ENCODE measurements at regions of chr6 and their contacts with region 1.

Region 1: DNA sequence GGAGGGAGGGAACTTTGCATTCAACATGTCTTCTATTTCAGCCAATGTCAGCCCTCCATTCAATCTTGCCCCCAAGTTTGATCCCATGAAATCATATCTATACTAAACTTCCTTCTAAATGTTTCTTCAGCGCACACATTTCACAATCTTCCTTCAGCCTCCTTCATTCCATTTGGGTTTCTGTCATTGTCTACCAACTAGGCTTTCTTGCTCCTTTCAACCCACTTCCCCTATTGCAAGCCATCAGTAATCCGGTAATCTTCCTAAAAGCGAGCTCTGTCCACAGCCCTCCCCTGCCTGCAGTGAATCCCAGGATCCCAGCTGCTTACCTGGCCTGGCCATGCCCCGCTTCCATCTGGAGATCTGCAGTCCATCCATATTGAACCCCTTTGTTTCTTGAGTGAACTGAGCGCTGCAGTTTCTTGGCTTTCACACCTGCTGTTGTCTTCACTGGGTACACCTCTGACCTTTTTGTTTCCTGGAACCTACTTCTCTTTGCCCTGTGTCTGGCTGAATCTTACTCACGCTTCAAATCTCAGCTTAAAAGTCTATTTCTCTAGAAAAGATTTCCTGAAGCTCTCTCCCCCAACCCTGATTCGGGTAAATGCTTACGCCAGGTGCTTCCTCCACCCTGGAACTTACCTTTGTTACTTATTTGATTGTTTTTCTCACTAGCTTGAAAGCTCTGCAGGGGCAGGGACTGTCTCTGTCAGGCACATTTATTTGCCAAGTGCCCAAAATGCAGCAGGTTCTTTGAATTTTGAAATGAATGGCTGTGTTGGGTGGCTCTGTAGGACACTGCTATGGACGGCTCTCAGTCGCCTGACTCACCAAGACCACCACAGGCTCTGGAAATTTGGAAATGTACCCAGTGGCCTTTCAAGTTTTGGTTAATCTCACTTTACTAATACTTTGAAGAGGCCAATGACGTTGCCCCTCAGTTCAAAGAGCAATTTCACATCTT is 50.3 kb downstream of the ADTRP start:
- DNase-seq: no peak
- H3K4me3 Mint-ChIP-seq: peak overlapping the region; percentile 53
- H3K27ac Mint-ChIP-seq: peak overlapping the region; percentile 72
- H3K4me1 Mint-ChIP-seq: peaks cover 69% of the 10 kb centered on the region
- H3K27me3 Mint-ChIP-seq: peaks cover 4% of the 10 kb centered on the region

Region 2: DNA sequence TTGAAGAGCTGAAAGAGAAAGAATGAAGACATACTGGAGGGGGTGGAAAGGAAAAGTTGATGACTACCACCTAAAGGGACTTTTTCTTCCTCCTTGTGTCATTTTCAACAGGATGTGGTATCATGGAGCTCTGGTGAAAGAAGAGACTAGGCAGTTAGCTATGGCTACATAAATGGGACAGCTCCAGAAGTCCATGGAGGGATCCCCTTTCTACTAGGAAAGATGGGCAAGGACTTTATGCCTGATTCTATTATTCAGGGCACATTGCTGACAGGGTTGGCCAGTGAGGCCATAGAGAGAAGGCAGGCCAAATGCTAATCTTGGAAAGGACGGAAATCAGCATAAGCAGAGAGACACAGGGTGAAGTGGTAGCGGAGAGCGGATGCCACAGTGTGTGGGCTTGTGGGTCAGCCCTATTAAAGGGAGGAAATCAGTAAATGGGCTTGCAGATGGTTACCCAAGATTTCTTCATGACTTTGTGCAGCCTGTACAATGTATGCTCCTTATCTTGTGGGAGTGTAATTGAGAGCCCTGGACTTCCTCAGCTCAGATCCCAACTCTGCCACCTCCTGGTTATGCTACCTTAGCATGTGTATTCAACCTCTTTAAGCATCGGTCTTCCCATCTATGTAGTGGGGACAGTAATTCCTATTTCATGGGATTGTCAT is 268.1 kb before region 1 on chr6:
- intact Hi-C with region 1: no loop called
- DNase-seq: no peak
- H3K4me3 Mint-ChIP-seq: peak overlapping the region; percentile 67
- H3K27ac Mint-ChIP-seq: peak overlapping the region; percentile 91
- H3K4me1 Mint-ChIP-seq: peaks cover 29% of the 10 kb centered on the region
- H3K27me3 Mint-ChIP-seq: peaks cover 2% of the 10 kb centered on the region

Region 3: GRCh38 chr6:11675601-11676000 is 52.7 kb before region 1 on chr6:
- intact Hi-C with region 1: no loop called
- DNase-seq: no peak
- H3K4me3 Mint-ChIP-seq: no peak overlapping the region
- H3K27ac Mint-ChIP-seq: no peak overlapping the region
- H3K4me1 Mint-ChIP-seq: no peaks in the 10 kb centered on the region
- H3K27me3 Mint-ChIP-seq: peaks cover 10% of the 10 kb centered on the region

Region 4: DNA sequence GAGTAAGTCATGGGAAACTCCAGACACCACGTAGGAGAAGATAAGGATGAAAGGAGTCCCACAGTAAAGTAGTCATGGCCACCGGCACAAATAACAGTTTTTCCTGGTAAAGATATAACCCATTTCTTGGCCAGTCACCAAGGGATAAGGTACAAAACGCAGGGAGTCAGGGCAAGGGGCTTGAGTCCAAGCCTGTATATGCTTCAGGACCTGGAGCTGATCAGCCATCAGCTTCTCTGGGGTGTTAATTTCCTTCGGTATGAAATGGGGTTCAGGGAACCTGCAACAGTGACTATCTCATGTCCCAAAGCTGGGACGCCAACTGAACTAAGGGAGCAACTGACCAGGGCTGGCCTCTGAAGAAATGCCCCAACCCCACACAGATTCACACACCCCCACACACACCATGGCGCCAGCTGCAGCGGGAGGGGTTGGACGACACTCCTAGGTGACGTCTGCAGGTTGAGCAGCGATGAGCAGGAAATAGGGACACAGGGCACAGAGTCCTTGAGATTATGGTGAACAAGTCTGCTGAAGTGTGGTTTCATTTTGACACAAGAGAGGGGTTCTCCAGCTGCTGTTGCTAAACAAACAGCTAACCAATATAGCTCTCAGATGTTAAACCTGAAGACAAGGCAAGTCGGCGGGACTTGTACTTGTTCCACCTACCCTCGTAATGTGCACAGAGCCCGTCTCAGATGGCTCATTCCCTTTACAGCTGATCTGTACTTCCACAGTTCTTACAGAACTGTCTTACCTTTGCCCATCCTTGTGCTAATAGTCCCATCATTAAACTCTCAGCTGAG is 57.7 kb after region 1 on chr6:
- intact Hi-C with region 1: loop called (anchors 1 kb)
- DNase-seq: peak; percentile 20
- H3K4me3 Mint-ChIP-seq: peak overlapping the region; percentile 40
- H3K27ac Mint-ChIP-seq: no peak overlapping the region
- H3K4me1 Mint-ChIP-seq: peaks cover 6% of the 10 kb centered on the region
- H3K27me3 Mint-ChIP-seq: no peaks in the 10 kb centered on the region

Region 5: GRCh38 chr6:11805261-11806053 is 77.2 kb after region 1 on chr6:
- intact Hi-C with region 1: no loop called
- DNase-seq: no peak
- H3K4me3 Mint-ChIP-seq: no peak overlapping the region
- H3K27ac Mint-ChIP-seq: no peak overlapping the region
- H3K4me1 Mint-ChIP-seq: peaks cover 7% of the 10 kb centered on the region
- H3K27me3 Mint-ChIP-seq: no peaks in the 10 kb centered on the region

Region 6: DNA sequence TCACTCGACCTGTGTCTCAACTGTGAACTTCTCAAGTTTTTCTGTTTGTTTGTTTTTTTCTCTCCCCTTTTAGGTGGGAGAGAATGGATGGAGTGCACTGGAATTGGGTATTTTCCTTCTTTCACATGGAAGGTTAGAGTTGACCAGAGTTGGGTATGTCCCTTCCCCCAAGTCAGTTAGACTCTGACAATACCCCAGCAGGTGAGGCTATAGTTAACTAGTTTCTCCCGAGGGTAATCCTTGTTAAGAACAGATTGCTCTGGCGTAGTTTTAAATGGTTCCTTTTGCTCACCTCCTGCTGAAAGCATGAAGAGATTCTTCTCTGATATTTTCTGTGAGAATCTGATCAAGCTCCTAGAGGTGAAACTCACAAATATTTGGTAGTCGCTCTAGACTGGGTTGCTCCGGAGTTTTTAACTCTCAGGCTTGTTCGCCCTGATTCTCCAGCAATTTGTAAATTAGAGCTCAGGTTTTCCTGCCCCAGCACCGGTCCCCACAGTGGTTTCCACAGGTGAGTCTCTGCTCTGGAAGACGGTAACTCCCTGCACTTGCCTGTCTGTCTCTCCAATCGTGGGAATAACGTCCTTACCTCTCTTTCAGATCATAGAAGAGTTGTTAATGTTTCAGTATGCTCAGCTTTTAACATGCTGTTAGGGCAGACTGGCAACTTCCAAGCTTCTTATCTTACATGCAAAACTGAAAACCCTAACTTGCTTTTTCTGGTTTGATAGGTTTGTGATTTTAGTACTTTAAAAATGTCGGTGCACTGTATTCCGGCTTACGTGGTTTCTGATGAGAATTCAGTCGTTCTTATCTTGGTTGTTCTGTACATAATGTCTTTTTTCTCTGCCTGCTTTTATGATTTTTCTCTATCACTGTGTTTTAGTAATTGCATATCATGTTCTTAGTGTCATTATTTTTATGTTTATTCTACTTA is 172.7 kb after region 1 on chr6:
- intact Hi-C with region 1: loop called (anchors 2 kb)
- DNase-seq: no peak
- H3K4me3 Mint-ChIP-seq: peak overlapping the region; percentile 20
- H3K27ac Mint-ChIP-seq: peak overlapping the region; percentile 3
- H3K4me1 Mint-ChIP-seq: peaks cover 28% of the 10 kb centered on the region
- H3K27me3 Mint-ChIP-seq: peaks cover 43% of the 10 kb centered on the region

Region 7: DNA sequence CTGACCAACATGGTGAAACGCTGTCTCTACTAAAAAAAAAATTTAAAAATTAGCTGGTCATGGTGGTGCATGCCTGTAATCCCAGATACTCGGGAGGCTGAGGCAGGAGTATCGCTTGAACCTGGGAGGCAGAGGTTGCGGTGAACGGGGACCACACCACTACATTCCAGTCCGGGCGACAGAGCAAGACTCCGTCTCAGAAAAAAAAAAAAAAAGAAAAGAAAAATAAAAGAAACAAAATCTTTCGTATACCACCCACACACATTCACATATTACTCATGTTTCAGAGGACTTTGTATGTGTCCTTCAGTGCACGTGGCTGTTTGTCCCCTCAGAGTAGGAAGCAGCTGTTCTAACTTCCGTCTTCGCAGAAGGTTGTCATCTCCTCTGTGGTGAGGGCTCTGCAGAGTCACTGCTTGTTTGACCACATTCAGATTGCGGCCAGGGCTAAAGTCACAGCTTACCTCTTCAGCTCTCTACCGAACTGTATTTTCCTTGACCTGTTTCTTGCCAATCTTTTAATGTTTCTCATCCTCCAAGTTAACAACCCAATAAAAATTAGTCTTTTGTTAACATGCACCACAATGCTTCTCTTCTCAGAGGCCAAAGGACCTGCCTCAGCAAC is 247.2 kb after region 1 on chr6:
- intact Hi-C with region 1: loop called (anchors 5 kb)
- DNase-seq: peak; percentile 15
- H3K4me3 Mint-ChIP-seq: no peak overlapping the region
- H3K27ac Mint-ChIP-seq: no peak overlapping the region
- H3K4me1 Mint-ChIP-seq: peaks cover 24% of the 10 kb centered on the region
- H3K27me3 Mint-ChIP-seq: no peaks in the 10 kb centered on the region

Region 8: DNA sequence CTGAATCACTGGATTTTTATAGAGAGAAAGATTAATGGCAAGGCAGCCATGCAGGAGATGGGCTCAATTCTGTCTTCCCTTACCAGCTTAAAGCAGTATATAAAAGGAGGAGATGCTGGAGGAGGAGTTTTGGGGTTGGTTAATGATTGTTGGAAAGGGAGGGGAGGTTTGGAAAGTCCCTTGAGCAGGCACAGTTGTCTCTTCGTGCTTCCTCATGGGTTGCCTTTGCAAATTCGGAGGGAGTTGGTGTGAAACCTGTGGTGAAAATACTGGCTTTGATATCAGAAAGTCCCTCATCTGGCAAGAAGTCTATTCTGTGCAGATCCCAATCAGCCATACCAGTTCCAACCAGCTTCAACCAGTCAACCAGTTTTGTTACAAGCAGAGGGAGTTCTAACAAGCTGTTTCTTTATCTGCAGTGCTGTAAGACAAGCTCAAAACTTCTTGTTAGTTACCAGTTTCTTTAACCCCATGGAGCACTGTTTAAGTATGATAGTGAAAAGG is 390.9 kb after region 1 on chr6:
- intact Hi-C with region 1: loop called (anchors 5 kb)
- DNase-seq: peak; percentile 61
- H3K4me3 Mint-ChIP-seq: peak overlapping the region; percentile 11
- H3K27ac Mint-ChIP-seq: peak overlapping the region; percentile 75
- H3K4me1 Mint-ChIP-seq: peaks cover 47% of the 10 kb centered on the region
- H3K27me3 Mint-ChIP-seq: no peaks in the 10 kb centered on the region